ENCODE measurements at regions of chr16 and their contacts with region 1.

Region 1: GRCh38 chr16:56814537-56815432 is 50.2 kb upstream of the SLC12A3 start:
- DNase-seq: no peak
- H3K4me3 ChIP-seq: no peak overlapping the region
- H3K27ac ChIP-seq: peak overlapping the region; percentile 5 to 9
- H3K4me1 ChIP-seq: no peaks in the 10 kb centered on the region
- H3K27me3 ChIP-seq: no peaks in the 10 kb centered on the region
- CTCF ChIP-seq: no peak
- POLR2A ChIP-seq: no peak

Region 2: DNA sequence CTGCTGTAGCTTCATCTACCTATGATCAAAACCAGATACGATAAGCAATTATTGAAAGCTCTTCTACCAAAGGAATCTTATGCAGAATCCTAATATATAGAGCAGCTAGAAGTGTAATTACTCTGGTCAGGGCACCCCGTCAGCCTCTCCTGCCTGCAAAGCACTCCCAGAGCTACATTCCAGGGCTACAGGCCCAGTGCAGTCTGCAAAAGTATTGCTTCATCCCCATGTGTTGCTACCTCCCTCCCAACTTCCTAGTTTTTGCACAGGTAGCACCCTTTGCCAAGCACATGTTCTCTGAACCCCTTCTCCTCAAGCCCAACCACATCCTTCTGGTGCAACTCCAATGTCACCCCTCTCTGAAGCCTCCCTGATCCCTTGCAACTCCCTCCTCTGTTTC is 946.6 kb before region 1 on chr16:
- intact Hi-C with region 1: loop called (anchors 10 kb)
- DNase-seq: no peak
- H3K4me3 ChIP-seq: no peak overlapping the region
- H3K27ac ChIP-seq: no peak overlapping the region
- H3K4me1 ChIP-seq: no peaks in the 10 kb centered on the region
- H3K27me3 ChIP-seq: no peaks in the 10 kb centered on the region
- CTCF ChIP-seq: no peak
- POLR2A ChIP-seq: no peak

Region 3: DNA sequence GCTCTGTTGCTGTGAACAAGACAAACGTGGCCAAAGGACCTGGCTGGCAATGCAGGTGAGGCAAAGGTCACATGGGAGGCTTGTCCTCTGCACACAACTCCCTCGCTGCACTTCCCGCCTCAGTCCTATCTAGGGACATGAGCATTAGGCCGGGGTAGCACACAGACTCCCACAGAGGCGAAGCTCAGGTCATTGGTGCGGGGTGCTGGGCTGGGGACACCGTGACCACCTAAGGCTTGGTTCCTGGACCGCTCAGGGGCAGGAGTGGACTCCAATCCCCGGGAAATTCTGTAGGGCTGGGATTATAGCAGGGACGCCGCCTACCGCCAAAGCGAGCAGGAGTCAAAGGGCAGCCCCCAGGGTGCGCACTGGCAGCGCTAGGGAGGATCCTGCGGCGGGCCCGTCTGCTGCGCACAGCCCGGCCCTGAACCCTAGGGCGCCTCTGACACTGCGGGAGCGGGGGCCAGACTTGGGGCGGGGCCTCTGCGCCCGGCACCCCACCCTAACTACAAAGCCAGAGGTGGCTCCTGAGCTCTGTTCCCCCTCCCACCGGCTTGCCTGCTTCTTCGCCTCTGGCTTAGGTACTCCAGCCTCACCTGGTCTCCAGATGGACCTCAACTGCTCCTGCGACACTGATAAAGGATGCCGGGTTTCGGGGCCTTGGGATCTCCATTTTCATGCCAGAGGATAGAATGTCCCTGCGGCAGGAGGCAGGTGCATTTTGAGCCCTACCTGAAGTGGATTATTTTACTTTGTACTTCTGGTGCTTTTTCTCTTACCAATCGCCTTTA is 166.9 kb before region 1 on chr16:
- intact Hi-C with region 1: no loop called
- DNase-seq: no peak
- H3K4me3 ChIP-seq: no peak overlapping the region
- H3K27ac ChIP-seq: no peak overlapping the region
- H3K4me1 ChIP-seq: peaks cover 8% of the 10 kb centered on the region
- H3K27me3 ChIP-seq: no peaks in the 10 kb centered on the region
- CTCF ChIP-seq: no peak
- POLR2A ChIP-seq: no peak

Region 4: DNA sequence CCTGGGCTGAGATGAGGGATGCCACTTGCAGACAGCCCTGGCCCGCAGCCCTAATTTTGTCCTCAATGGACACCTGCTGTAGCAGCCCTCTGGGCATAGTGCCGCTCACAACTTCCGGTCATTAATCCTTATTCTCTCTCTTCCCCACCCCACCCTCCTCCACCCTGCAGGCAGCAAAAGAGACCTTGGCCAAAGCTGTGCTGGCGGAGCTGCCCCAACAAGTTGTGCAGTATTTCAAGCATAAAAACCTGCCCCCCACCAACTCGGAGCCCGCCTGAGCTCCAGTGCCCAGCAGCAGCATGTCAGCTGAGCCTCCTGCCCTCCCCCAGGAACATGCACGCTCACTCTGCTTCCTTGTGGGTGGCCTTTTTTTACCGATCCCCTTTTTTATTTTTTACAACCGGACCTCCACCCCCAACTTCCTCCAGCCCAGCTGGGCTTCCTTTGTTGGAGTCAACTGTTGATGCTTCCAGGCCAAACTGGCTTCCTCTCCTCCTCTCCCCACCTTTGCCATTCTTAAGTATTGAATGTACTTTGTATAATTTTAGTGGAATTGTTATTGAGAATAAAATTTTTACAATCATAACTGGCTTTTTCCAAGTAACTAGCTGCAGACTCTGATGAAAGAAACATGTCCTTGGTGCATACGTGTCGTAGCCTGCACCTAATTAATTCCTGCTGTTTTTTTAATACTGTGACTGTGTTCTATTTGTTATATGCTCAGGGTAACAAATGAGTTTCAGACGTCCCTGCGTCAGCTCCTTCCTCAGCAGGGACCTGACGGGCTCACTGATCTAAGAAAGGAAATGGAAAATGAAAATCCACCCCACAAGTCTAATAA is 332.8 kb after region 1 on chr16:
- intact Hi-C with region 1: no loop called
- DNase-seq: no peak
- H3K4me3 ChIP-seq: no peak overlapping the region
- H3K27ac ChIP-seq: peak overlapping the region in 1 of 2 donors; percentile 61
- H3K4me1 ChIP-seq: peaks cover 32% of the 10 kb centered on the region
- H3K27me3 ChIP-seq: no peaks in the 10 kb centered on the region
- CTCF ChIP-seq: no peak
- POLR2A ChIP-seq: no peak

Region 5: GRCh38 chr16:57260294-57260929 is 445.6 kb after region 1 on chr16:
- intact Hi-C with region 1: no loop called
- DNase-seq: peak; percentile 15
- H3K4me3 ChIP-seq: no peak overlapping the region
- H3K27ac ChIP-seq: peak overlapping the region; percentile 31 to 58
- H3K4me1 ChIP-seq: peaks cover 14% of the 10 kb centered on the region
- H3K27me3 ChIP-seq: no peaks in the 10 kb centered on the region
- CTCF ChIP-seq: no peak
- POLR2A ChIP-seq: no peak

Measured in testis (tissue), 5 donors.